Activated CD4-positive, alpha-beta T cell treated with anti-CD3 and anti-CD28 coated beads, Interleukin-2, amount 10 ng/mL, durations not matched to agents 7 days and 5 days (primary cell): ENCODE measurements at regions of chr1 and their contacts with region 1.

Region 1: DNA sequence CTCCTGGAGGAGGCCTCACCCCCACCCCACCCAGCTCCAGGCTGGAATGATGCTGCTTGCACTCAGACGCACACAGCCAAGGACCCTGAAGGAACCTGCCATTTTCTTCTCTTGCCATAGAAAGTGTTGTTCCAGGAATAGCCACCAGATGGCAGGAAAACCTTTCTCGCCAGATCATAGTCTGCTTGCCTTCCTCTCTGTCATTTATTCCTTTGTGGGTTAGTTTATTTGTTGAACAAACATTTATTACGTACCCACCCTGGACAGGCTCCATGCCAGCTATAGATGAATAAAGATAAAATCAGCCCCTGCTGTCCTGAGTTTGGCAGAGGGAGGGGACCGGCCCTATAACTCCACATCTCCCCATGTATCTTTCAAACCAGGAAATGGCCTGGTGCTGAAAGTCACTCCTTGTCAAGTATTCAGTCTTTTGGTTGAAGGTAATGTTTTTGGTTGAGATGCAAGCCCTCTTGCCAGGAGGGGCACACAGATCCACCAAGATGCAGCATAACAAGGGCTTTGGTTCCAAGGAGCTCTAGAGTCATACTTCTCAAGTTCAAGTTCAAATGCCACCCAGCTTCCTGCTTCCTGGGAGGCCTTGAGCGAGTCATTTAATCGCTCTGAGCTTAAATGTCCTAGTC is 7.0 kb upstream of the KCNC4 start:
- DNase-seq: peak; percentile 85
- H3K4me3 Mint-ChIP-seq: no peak overlapping the region
- H3K27ac Mint-ChIP-seq: peak overlapping the region; percentile 92
- H3K4me1 Mint-ChIP-seq: peaks cover 25% of the 10 kb centered on the region
- H3K27me3 Mint-ChIP-seq: no peaks in the 10 kb centered on the region

Region 2: GRCh38 chr1:110243574-110243973 is 40.4 kb after region 1 on chr1:
- CTCF ChIA-PET with region 1: interaction called, 10 read pairs
- POLR2A ChIA-PET with region 1: no interaction called
- DNase-seq: no peak
- H3K4me3 Mint-ChIP-seq: no peak overlapping the region
- H3K27ac Mint-ChIP-seq: no peak overlapping the region
- H3K4me1 Mint-ChIP-seq: peaks cover 5% of the 10 kb centered on the region
- H3K27me3 Mint-ChIP-seq: no peaks in the 10 kb centered on the region

Region 3: GRCh38 chr1:110312188-110313121 is 109.3 kb after region 1 on chr1:
- CTCF ChIA-PET with region 1: interaction called, 73 read pairs
- POLR2A ChIA-PET with region 1: no interaction called
- DNase-seq: peak; percentile 74
- H3K4me3 Mint-ChIP-seq: no peak overlapping the region
- H3K27ac Mint-ChIP-seq: no peak overlapping the region
- H3K4me1 Mint-ChIP-seq: no peaks in the 10 kb centered on the region
- H3K27me3 Mint-ChIP-seq: no peaks in the 10 kb centered on the region

Region 4: GRCh38 chr1:110319332-110320152 is 116.4 kb after region 1 on chr1:
- CTCF ChIA-PET with region 1: interaction called, 73 read pairs
- POLR2A ChIA-PET with region 1: no interaction called
- DNase-seq: no peak
- H3K4me3 Mint-ChIP-seq: no peak overlapping the region
- H3K27ac Mint-ChIP-seq: no peak overlapping the region
- H3K4me1 Mint-ChIP-seq: no peaks in the 10 kb centered on the region
- H3K27me3 Mint-ChIP-seq: no peaks in the 10 kb centered on the region

Region 5: DNA sequence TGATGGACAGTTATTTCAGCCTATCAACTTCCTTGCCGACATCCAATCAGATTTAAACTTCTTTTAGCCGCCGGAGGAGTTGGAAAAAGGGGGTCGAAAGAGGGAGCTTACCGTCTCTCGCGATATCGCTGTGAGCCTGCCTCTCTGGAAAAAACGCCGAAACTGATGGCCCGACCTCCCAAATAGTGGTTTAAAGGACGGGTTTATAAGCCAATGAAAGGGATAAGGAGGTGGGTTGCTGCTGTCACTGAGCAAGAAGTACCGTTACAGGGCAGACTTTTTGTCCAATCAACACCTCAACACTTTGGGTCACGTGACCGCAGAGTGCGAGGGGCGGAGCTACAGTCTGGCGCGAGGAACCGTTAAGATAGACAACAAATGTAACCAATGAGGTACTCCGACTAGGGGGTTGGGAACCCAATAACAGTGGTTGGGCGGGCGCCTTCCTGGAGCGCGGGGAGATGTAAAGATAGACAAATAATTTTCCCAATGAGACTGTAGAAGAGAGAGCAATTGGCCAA is 135.8 kb after region 1 on chr1 and contains the start of gene RBM15:
- CTCF ChIA-PET with region 1: interaction called, 43 read pairs
- POLR2A ChIA-PET with region 1: no interaction called
- DNase-seq: peak; percentile 99
- H3K4me3 Mint-ChIP-seq: no peak within 1 kb of the TSS
- H3K27ac Mint-ChIP-seq: no peak within 1 kb of the TSS
- H3K4me1 Mint-ChIP-seq: peaks cover 59% of the 10 kb centered on the region
- H3K27me3 Mint-ChIP-seq: no peaks in the 10 kb centered on the region
- total RNA-seq, gene RBM15: 69.9 to 71.2 TPM

Region 6: DNA sequence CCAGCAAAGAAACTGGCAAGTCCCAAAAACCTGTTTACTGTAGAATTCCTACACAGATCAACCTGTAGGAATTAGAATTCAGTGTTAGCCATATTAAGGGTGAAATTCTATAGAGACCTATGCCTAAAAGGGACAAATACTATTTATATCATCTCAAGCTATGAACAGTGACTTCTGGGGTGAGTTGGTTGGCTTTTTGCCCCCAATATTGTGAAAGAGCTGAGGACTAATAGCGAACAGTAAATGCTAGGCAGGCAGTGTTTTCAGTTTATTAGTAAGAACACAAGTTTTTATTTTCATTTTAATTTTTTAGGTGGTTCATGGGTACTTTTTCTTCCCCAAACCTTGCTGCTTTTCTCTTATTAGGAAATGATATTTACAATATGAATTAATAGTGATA is 172.3 kb after region 1 on chr1:
- CTCF ChIA-PET with region 1: no interaction called
- POLR2A ChIA-PET with region 1: no interaction called
- DNase-seq: no peak
- H3K4me3 Mint-ChIP-seq: no peak overlapping the region
- H3K27ac Mint-ChIP-seq: no peak overlapping the region
- H3K4me1 Mint-ChIP-seq: peaks cover 1% of the 10 kb centered on the region
- H3K27me3 Mint-ChIP-seq: no peaks in the 10 kb centered on the region

Region 7: GRCh38 chr1:110495926-110496600 is 292.9 kb after region 1 on chr1:
- CTCF ChIA-PET with region 1: interaction called, 48 read pairs
- POLR2A ChIA-PET with region 1: no interaction called
- DNase-seq: peak; percentile 86
- H3K4me3 Mint-ChIP-seq: no peak overlapping the region
- H3K27ac Mint-ChIP-seq: no peak overlapping the region
- H3K4me1 Mint-ChIP-seq: peaks cover 4% of the 10 kb centered on the region
- H3K27me3 Mint-ChIP-seq: no peaks in the 10 kb centered on the region